ENCODE measurements at regions of chr12 and their contacts with region 1.

Region 1: GRCh38 chr12:13278249-13278787 is 81.8 kb downstream of the EMP1 start:
- DNase-seq: peak; percentile 69 to 82
- ATAC-seq: peak; percentile 94 to 98
- H3K4me3 ChIP-seq: no peak overlapping the region
- H3K27ac ChIP-seq: peak overlapping the region; percentile 40 to 47; a peak in 3 of 6 replicates
- H3K4me1 ChIP-seq: no peaks in the 10 kb centered on the region
- CTCF ChIP-seq: peak; percentile 95
- EP300 ChIP-seq: no peak
- POLR2A ChIP-seq: no peak
- RAD21 ChIP-seq: peak; percentile 90 to 93

Region 2: DNA sequence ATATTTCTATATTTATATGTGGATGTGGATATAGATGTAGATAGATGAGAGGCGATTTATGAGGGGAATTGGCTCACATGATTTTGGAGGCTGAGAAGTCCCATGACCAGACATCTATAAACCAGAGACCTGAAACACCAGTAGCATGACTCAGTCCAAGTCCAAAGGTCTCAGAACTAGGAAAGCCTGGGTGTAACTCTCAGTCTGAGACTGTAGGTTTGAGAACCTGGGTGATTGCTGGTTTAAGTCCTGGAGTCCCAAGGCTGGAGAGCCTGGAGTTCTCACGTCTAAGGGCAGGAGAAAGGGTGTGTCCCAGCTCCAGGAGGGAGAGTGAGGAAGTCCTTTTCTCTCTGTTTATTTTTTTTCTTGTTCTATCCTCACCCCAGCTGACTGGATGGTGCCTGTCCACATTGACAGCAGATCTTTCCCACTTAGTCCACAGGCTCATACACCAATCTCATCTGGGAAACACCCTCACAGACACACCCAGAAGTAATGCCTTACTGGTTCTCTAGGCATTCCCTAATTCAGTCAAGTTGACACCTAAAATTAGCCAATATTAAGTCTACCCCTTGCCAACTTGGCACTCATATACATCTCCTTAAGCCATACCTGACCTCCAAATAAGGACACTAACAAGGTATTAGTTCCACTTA is 36.4 kb before region 1 on chr12:
- CTCF ChIA-PET with region 1: no interaction called
- POLR2A ChIA-PET with region 1: no interaction called
- DNase-seq: peak in 1 of 2 experiments; percentile 86
- ATAC-seq: peak; percentile 97
- H3K4me3 ChIP-seq: no peak overlapping the region
- H3K27ac ChIP-seq: peak overlapping the region; percentile 50 to 65
- H3K4me1 ChIP-seq: peaks cover 19% of the 10 kb centered on the region
- CTCF ChIP-seq: no peak
- EP300 ChIP-seq: no peak
- POLR2A ChIP-seq: no peak
- RAD21 ChIP-seq: no peak

Region 3: DNA sequence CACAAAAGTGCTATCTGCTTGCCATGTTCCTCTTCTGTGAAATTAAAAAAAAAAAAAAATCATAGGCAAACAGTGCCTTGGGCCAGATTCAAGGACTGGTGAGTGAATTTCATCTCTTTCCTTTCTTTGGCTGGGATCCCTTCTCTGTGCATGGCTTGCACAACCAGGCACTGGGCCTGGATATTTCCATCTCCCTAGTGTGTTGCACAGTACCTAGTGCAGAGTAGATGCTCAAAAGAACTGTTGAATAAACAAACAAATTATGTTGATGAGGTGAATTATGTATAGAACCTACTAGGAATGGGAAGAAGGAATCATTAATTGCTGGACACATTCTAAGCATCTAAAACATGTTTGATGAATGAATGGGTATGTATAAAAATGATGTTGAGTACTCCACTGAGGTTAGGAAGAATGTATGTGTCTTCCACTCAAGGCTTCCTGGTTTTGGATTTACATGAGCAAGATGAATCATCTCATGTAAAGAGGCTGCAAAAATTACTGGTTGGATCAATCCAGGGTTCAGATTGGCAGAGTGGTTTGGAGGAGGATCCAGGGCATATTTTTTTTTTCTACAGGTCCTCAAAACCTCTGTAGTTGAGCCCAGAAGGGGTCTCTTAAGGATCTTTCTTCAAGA is 11.5 kb after region 1 on chr12:
- CTCF ChIA-PET with region 1: interaction called, 15 read pairs
- POLR2A ChIA-PET with region 1: no interaction called
- DNase-seq: no peak
- ATAC-seq: no peak
- H3K4me3 ChIP-seq: no peak overlapping the region
- H3K27ac ChIP-seq: no peak overlapping the region
- H3K4me1 ChIP-seq: 0 out of 3 replicates have a peak, but pooled peaks cover 4% of the 10 kb centered on the region
- CTCF ChIP-seq: no peak
- EP300 ChIP-seq: no peak
- POLR2A ChIP-seq: no peak
- RAD21 ChIP-seq: no peak

Region 4: DNA sequence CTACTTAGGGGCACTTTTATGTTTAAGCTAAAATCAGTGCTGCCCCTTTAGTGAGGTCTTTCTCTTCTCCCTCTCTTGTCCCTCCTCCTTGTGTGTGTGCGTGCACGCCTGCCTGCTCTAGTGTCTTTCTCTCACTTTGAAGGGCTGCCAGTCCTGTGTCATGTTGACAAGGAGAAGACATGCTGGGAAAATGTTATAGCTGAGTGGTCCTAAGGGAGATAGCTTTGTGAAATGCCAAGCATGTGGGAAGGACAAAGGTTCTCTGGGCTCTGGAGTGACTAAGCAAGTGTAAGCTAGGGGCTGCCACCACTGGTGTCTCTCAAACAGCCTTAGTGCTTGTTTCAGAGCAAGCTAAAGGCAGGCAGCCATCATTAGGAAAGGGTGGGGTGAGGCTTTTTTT is 26.6 kb after region 1 on chr12:
- CTCF ChIA-PET with region 1: interaction called, 15 read pairs
- POLR2A ChIA-PET with region 1: no interaction called
- DNase-seq: no peak
- ATAC-seq: no peak
- H3K4me3 ChIP-seq: no peak overlapping the region
- H3K27ac ChIP-seq: no peak overlapping the region
- H3K4me1 ChIP-seq: no peaks in the 10 kb centered on the region
- CTCF ChIP-seq: no peak
- EP300 ChIP-seq: no peak
- POLR2A ChIP-seq: no peak
- RAD21 ChIP-seq: no peak

Region 5: GRCh38 chr12:14167005-14167628 is 888.8 kb after region 1 on chr12:
- CTCF ChIA-PET with region 1: interaction called, 16 read pairs
- POLR2A ChIA-PET with region 1: no interaction called
- DNase-seq: peak; percentile 60 to 61
- ATAC-seq: peak; percentile 68 to 84; a peak in 4 of 6 replicates
- H3K4me3 ChIP-seq: no peak overlapping the region
- H3K27ac ChIP-seq: no peak overlapping the region
- H3K4me1 ChIP-seq: no peaks in the 10 kb centered on the region
- CTCF ChIP-seq: peak; percentile 97
- EP300 ChIP-seq: no peak
- POLR2A ChIP-seq: no peak
- RAD21 ChIP-seq: peak; percentile 96 to 99

Measured in A549 (cell line).